GM10248 (cell line): ENCODE measurements at regions of chr12 and their contacts with region 1.

Region 1: GRCh38 chr12:49060237-49061156 is at the start of gene KMT2D:
- DNase-seq: peak; percentile 92
- CTCF ChIP-seq: no peak

Region 2: GRCh38 chr12:49037111-49037946 is 23.2 kb before region 1 on chr12:
- CTCF ChIA-PET with region 1: interaction called, 30 read pairs
- POLR2A ChIA-PET with region 1: interaction called, 3 read pairs
- DNase-seq: no peak
- CTCF ChIP-seq: no peak

Region 3: DNA sequence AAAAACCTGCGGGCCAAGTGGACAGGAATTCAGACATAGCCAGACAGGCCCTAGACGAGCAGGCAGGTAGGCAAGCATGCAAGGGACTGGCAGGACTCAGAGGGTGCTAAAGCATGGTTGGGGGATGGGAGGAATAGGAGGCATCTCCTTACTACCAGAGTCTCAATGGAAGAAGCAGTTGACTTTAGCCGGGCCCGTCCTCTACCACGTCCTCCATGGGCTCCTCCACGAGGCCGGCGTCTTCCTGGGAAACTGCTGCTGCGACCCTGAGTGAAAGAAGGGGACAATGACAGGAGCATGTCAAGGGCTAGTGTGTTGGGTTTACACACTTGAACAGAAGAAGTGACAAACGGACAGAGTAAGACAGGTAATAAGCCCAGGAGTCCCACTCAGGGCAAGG is 11.5 kb before region 1 on chr12:
- CTCF ChIA-PET with region 1: interaction called, 30 read pairs
- POLR2A ChIA-PET with region 1: interaction called, 3 read pairs
- DNase-seq: no peak
- CTCF ChIP-seq: no peak

Region 4: GRCh38 chr12:49088190-49088931 is 27.9 kb after region 1 on chr12:
- CTCF ChIA-PET with region 1: interaction called, 184 read pairs
- POLR2A ChIA-PET with region 1: no interaction called
- DNase-seq: peak; percentile 83
- CTCF ChIP-seq: peak; percentile 92

Region 5: GRCh38 chr12:49232940-49233841 is 172.7 kb after region 1 on chr12:
- CTCF ChIA-PET with region 1: interaction called, 10 read pairs
- POLR2A ChIA-PET with region 1: no interaction called
- DNase-seq: no peak
- CTCF ChIP-seq: no peak